Heart left ventricle (tissue), 16 donors: ENCODE measurements at regions of chr22 and their contacts with region 1.

Region 1: DNA sequence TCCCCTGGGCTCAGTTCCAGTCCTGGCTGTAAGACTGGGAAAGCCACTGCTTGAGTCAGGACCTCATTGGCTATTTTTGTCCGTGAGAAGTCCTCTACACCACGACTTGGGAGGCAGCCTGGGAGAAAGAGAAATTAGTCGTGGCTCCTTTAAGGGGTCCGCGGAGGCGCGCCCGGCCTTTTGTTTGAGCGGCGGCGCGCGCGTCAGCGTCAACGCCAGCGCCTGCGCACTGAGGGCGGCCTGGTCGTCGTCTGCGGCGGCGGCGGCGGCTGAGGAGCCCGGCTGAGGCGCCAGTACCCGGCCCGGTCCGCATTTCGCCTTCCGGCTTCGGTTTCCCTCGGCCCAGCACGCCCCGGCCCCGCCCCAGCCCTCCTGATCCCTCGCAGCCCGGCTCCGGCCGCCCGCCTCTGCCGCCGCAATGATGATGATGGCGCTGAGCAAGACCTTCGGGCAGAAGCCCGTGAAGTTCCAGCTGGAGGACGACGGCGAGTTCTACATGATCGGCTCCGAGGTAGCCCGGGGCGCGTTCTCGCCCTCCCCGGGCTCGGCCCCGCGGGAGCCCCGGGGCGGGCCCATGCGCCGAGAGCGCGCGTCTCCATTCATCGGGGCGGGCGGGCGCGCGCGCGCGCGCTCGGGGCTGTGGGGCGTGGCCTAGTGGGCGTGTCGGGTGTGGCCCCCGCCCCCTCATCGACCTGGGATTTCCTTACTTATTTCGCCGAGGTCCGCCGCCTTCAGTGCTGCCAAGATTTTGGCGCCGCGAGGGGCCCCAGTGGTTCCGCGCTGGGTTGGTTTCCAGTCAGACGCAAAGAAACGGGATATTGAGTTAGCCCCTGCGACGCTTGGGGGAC is at the start of gene SMARCB1:
- DNase-seq: peak; percentile 92 to 96 (median 94)
- ATAC-seq: peak; percentile 82 to 94 (median 92)
- H3K4me3 ChIP-seq: peak within 1 kb of the TSS; percentile 63 to 100 (median 96)
- H3K27ac ChIP-seq: peak within 1 kb of the TSS; percentile 91 to 100 (median 100)
- H3K4me1 ChIP-seq: peaks cover 8 to 56% (median 47%) of the 10 kb centered on the region in 12 donors
- H3K27me3 ChIP-seq: no peaks in the 10 kb centered on the region
- CTCF ChIP-seq: no peak
- POLR2A ChIP-seq: peak in 1 of 2 donors; percentile 84
- total RNA-seq, gene SMARCB1: 32.8 to 54.2 (median 45.6) TPM

Region 2: DNA sequence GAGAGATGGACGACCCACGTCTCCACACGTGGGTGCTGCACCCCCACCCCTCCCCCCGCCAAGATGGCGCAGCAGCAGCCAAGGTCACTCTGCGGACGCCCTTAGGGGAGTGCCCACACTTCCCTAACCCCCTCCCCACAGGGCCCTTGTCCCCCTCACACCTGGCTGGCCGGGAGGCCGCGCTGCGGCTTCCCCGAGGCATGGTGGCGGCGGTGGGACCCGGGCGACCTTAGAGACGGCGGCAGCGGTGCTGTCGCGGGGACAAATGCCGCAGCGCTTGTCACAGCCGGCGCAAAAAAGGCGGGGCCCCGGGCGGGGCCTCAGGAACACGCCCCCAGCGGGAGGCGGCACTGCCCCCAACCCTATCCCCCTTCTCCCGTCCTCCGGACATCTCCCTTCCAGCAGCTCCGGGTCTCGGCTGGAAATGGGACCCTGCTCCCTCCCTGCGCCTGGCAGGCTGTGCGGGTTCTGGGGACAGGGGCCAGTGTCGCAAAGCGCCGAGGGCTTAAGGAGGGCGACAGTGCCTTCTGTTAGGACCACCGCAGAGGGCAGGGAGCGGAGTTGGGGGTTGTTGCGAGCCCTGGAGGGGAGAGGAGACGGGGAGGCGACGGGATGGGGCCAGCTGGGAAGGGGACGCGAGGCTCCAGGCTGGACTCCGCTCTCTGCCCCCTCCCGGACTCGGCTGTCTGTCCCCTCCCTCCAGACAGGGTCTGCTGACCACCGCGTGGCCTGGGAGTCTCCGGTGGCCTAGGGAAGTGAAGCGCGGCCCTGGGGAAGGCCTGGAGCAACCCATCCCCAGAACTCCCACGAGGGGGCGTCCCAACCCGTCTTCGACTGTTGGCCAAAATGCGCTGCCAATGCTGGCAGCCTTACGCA is 19.1 kb before region 1 on chr22 and contains the start of gene CHCHD10:
- intact Hi-C with region 1: loop called in 2 of 10 experiments (anchors 2 kb)
- DNase-seq: peak; percentile 88 to 92 (median 90)
- ATAC-seq: peak; percentile 73 to 87 (median 82)
- H3K4me3 ChIP-seq: peak within 1 kb of the TSS; percentile 30 to 91 (median 66)
- H3K27ac ChIP-seq: peak within 1 kb of the TSS; percentile 82 to 97 (median 90)
- H3K4me1 ChIP-seq: peaks cover 0 to 70% (median 43%) of the 10 kb centered on the region in 12 donors
- H3K27me3 ChIP-seq: no peaks in the 10 kb centered on the region
- CTCF ChIP-seq: peak; percentile 73 to 92 (median 86)
- POLR2A ChIP-seq: peak; percentile 92 to 97
- total RNA-seq, gene CHCHD10: 374 to 1,458 (median 944) TPM

Region 3: GRCh38 chr22:23829845-23830372 is 42.9 kb after region 1 on chr22:
- intact Hi-C with region 1: loop called in 3 of 10 experiments (anchors 1 to 5 kb)
- DNase-seq: no peak
- ATAC-seq: no peak
- H3K4me3 ChIP-seq: no peak overlapping the region
- H3K27ac ChIP-seq: peak overlapping the region; percentile 61 to 97 (median 79)
- H3K4me1 ChIP-seq: peaks cover 4 to 98% (median 58%) of the 10 kb centered on the region in 12 donors
- H3K27me3 ChIP-seq: no peaks in the 10 kb centered on the region
- CTCF ChIP-seq: no peak
- POLR2A ChIP-seq: no peak

Region 4: DNA sequence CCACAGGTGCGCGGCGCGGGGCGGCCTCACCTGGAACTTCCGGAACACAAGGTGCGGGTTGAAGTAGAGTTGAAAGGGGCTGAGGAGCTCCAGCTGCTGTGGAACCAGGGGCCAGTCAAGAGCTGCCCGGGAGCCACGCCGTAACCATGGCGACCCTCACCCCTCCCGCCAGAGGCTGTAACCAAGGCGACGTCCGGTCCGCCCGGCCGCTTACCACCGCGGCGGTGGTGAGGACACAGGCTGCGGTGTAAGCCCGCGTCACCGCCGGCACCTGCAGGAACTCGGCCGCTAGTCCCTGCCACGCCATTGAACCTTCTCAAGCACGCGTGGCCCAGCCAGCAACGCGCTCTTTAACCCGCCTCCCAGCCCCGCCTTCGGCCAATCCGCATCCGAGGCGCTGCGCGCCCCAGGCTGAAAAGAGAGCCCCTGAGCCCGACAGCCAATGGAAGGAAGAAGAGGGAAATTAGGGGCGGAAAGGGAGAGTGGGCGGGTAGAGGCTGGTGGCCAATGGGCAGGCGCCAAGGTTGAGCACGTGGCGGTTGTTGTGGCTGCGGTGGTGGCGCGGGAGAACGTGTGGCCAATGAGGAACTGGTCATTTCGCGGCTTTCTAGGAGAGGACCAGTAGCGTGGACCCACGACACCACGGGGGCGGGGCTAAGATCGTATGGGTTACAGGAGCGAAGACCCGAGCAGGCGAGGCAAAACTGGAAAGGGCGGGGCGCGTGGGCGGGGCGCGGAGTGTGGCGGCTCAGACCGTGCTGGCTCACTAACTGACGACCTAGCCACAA is 51.9 kb after region 1 on chr22 and contains the start of gene DERL3:
- intact Hi-C with region 1: loop called in 3 of 10 experiments (anchors 1 to 5 kb)
- DNase-seq: peak; percentile 96 to 99 (median 98)
- ATAC-seq: peak; percentile 48 to 82 (median 76)
- H3K4me3 ChIP-seq: peak within 1 kb of the TSS; percentile 6 to 64 (median 50)
- H3K27ac ChIP-seq: peak within 1 kb of the TSS in 9 of 12 donors; percentile 2 to 97 (median 39)
- H3K4me1 ChIP-seq: peaks cover 6 to 58% (median 31%) of the 10 kb centered on the region in 12 donors
- H3K27me3 ChIP-seq: no peaks in the 10 kb centered on the region
- CTCF ChIP-seq: no peak
- POLR2A ChIP-seq: no peak
- total RNA-seq, gene DERL3: 0.24 to 2.8 (median 1.7) TPM

Region 5: DNA sequence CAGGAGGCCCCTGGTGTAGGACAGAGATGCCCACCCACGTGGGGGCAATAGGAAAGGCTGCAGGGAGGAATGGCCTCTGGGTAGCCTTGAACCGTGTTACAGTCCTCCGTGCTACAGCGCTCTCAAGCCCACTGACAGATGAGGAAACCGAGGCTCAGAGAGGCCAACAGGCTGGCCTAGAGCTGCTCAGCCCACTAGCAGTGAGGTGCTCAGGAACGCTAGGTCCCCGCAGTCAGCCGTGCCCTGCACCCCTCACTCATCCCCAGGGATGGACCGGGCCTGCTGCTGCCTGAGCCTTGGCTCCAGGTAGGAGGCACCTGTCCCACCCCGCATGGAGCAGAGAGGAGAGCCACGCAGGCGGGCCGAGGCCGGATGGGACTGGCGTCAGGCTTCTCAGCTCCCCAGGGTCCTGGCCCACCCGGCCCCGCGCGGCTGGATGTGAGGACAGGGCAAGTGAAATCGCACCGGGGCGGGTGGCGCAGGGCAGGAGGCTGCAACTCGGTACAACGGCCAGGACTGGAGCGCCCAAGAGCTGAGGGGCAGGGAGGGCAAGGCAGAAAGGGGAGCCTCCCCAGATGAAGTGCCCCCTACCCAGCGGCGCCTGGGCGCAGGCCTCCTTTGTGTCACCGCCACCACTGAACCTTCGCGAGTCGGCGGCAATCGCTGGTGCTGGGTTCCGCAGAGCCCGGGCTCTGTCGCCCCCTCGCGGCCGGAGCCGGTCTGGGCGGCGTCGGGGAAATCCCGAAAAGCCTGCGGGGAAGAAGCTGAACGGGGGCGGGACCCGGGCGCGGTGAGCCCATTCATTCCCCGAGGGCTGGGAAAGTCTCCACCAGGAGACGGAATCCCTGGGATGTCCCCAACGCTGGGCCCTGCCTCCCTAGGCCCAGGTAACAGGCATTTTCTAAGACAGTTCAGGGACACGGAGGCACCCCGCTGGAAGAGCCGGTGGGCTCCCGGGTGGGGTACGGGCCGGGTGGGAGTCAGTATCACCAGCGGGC is 62.3 kb after region 1 on chr22:
- intact Hi-C with region 1: loop called in 3 of 10 experiments (anchors 5 kb)
- DNase-seq: peak; percentile 81 to 94 (median 85)
- ATAC-seq: peak; percentile 11 to 65 (median 56)
- H3K4me3 ChIP-seq: peak overlapping the region in 4 of 12 donors; percentile 5 to 27 (median 24)
- H3K27ac ChIP-seq: no peak overlapping the region
- H3K4me1 ChIP-seq: peaks cover 3 to 51% (median 31%) of the 10 kb centered on the region in 12 donors
- H3K27me3 ChIP-seq: no peaks in the 10 kb centered on the region
- CTCF ChIP-seq: peak; percentile 95 to 99 (median 98)
- POLR2A ChIP-seq: no peak